Activated T-helper 2 cell treated with anti-CD3 and anti-CD28 coated beads, Interferon-gamma antibody, Interleukin-2, Interleukin-4, amounts not matched to agents 10 μg/mL and 5 μg/mL and 100 μg/mL, durations not matched to agents 14 hours and 24 hours and 36 hours (primary cell): ENCODE measurements at regions of chr17 and their contacts with region 1.

Region 1: GRCh38 chr17:38735161-38735997 is 5.2 kb downstream of the CISD3 start:
- DNase-seq: peak; percentile 56
- H3K4me3 Mint-ChIP-seq: no peak overlapping the region
- H3K27ac Mint-ChIP-seq: no peak overlapping the region
- H3K4me1 Mint-ChIP-seq: peaks cover 36% of the 10 kb centered on the region
- H3K27me3 Mint-ChIP-seq: no peaks in the 10 kb centered on the region

Region 2: GRCh38 chr17:38674749-38675615 is 60.4 kb before region 1 on chr17 and contains the start of gene EPOP:
- intact Hi-C with region 1: loop called (anchors 2 kb)
- DNase-seq: peak; percentile 88
- H3K4me3 Mint-ChIP-seq: peak within 1 kb of the TSS; percentile 57
- H3K27ac Mint-ChIP-seq: peak within 1 kb of the TSS; percentile 70
- H3K4me1 Mint-ChIP-seq: peaks cover 37% of the 10 kb centered on the region
- H3K27me3 Mint-ChIP-seq: peaks cover 19% of the 10 kb centered on the region
- total RNA-seq, gene EPOP: 34.9 TPM in 2 replicates